Body of pancreas (tissue), 4 donors: ENCODE measurements at regions of chr21 and their contacts with region 1.

Region 1: DNA sequence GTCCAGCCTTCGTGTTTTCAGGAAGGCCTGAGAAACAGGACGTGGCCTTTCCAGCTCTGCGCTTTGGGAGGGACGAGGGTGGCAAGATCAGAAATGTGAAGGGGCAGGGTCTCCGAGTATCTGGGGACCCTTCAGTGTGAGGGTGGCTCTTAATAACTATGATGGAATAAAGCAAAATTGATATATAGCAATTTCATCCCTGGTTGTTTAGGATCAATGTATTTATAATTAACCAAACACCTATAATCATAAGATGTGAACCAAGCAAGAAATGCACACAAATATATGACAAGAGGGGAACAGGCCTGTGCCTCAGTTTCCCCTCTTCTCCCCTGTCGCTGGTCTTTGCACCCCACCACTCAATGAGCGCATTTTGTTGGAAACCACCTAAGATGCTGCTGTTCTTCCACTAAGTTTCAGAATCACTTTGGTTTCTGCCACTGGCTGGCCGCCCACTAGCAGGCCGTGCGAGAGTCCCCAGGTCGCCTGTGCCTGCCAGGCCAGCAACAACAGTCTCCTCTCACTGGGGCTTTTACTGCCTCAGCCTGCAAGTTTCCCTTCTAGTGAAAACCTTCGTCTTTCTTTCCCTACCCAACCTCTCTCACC is 36.6 kb downstream of the UBASH3A start:
- DNase-seq: no peak
- ATAC-seq: no peak
- H3K4me3 ChIP-seq: no peak overlapping the region
- H3K27ac ChIP-seq: no peak overlapping the region
- H3K4me1 ChIP-seq: no peaks in the 10 kb centered on the region
- H3K27me3 ChIP-seq: no peaks in the 10 kb centered on the region
- CTCF ChIP-seq: no peak
- POLR2A ChIP-seq: no peak

Region 2: DNA sequence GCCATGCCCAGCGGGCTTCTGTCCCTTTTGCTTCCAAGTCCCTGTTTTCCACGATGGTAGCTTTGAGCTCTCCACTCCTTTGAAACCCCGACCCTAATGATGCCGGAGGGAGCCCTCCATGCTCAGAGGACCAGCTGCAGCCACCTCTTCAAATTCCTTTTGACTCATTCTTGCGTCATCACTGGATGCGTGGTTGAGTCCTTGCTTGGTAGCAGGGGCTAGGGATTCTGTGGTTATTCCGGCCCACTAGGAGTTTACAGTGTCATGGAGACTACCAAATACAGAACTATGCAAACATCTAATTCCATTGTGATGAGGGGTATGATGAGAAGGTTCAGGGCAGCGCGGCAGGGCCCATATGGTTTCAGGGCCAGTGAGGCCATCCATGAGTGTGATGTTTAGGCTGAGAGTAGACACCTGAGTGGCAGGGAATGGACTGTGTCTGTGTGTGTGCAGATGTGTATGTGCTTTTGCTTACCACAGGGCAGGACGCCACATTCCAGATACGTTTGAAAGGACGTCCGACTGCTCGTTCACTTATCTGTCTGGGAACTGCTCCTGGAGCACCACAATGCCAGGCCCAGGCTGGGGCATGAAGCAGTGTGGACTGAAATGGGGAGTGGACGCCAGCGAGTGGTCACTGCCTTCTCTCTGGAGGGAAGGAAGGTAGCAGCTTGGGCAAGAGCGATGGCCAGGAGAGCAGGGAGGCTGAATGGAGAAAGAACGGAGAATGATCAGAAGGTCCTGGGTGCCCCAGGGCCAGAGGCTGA is 399.7 kb before region 1 on chr21:
- intact Hi-C with region 1: no loop called
- DNase-seq: peak in 1 of 4 donors; percentile 56
- ATAC-seq: peak; percentile 23
- H3K4me3 ChIP-seq: no peak overlapping the region
- H3K27ac ChIP-seq: peak overlapping the region in 3 of 4 donors; percentile 63 to 85 (median 84)
- H3K4me1 ChIP-seq: peaks cover 22% of the 10 kb centered on the region
- H3K27me3 ChIP-seq: no peaks in the 10 kb centered on the region
- CTCF ChIP-seq: no peak
- POLR2A ChIP-seq: no peak

Region 3: DNA sequence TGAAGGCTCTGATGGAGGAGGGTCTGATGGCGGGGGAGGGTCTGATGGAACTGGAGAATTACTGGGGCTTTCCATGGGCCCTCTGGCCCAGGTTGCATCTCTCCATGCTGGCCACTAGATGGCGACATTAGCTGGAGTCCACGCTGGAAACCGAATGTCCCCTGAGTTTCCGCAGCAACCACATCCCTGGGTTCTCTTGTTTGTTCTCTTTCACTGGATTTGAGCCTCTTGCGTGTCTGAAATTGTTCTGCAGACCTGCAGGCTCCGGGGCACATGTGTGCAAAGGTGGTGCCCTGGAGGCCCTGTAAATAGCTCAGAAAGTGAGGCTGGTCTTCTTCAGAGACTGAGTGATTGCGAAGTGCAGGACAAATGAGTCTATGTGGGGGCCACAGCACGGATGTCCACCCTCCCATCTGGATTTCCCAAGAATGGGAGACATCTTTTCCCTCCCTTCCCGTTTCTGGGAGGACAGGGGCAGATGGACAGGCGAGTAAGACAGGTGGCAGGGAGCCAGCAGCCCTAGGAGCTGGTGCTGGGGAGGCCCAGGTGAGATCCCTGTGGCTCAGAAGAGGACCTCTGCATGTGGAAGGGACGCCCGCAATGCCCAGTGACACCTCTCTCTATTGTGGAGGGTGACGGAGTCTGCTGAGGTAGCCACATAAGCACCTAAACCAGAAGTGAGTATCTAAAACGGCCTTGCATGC is 294.6 kb before region 1 on chr21:
- intact Hi-C with region 1: loop called (anchors 10 kb)
- DNase-seq: peak; percentile 53 to 66 (median 62)
- ATAC-seq: peak; percentile 77
- H3K4me3 ChIP-seq: no peak overlapping the region
- H3K27ac ChIP-seq: no peak overlapping the region
- H3K4me1 ChIP-seq: peaks cover 3% of the 10 kb centered on the region
- H3K27me3 ChIP-seq: no peaks in the 10 kb centered on the region
- CTCF ChIP-seq: peak; percentile 87 to 95 (median 91)
- POLR2A ChIP-seq: no peak

Region 4: DNA sequence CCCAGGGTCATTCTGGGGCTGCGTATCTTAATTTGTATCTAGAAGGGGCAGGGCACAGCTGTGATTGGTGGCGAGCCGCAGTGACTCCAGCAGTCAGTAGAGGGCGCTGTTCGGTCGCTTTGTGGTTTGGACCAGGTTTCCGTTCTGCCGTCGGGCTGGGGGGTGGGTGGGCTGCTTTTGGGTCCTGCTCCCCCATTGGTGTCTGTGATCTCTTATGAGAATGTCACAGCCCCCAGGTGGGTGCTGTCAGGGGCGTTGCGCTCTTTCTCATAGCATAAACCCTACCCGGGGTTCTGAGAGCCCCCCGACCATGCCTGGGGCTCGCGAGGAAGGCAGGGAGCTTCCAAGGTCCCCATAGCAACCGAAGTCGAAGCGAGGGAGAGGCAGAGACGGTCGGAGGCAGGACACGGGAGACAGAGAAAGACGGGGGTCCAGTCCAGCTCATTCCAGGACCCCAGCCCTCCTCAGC is 130.5 kb before region 1 on chr21:
- intact Hi-C with region 1: loop called (anchors 10 kb)
- DNase-seq: peak; percentile 51 to 67 (median 57)
- ATAC-seq: peak; percentile 45
- H3K4me3 ChIP-seq: no peak overlapping the region
- H3K27ac ChIP-seq: no peak overlapping the region
- H3K4me1 ChIP-seq: peaks cover 32% of the 10 kb centered on the region
- H3K27me3 ChIP-seq: no peaks in the 10 kb centered on the region
- CTCF ChIP-seq: peak; percentile 45 to 85 (median 58)
- POLR2A ChIP-seq: no peak